ENCODE measurements at regions of chr1 and their contacts with region 1.

Region 1: GRCh38 chr1:236774926-236775325 is 20.2 kb upstream of the MTR start:
- DNase-seq: no peak
- ATAC-seq: peak; percentile 64 to 81
- H3K4me3 ChIP-seq: no peak overlapping the region
- H3K27ac ChIP-seq: no peak overlapping the region
- H3K4me1 ChIP-seq: no peaks in the 10 kb centered on the region
- H3K27me3 ChIP-seq: peaks cover 0 to 2% (median 0%) of the 10 kb centered on the region in 3 donors
- CTCF ChIP-seq: peak in 2 of 5 experiments; percentile 15 to 39
- POLR2A ChIP-seq: no peak

Region 2: GRCh38 chr1:236603991-236604904 is 170.7 kb before region 1 on chr1 and contains the start of gene HEATR1:
- in situ Hi-C with region 1: no loop called
- intact Hi-C with region 1: loop called (anchors 2 kb)
- DNase-seq: peak; percentile 92 to 93
- ATAC-seq: peak; percentile 96 to 97
- H3K4me3 ChIP-seq: peak within 1 kb of the TSS; percentile 75 to 88 (median 86)
- H3K27ac ChIP-seq: peak within 1 kb of the TSS; percentile 87 to 94 (median 89)
- H3K4me1 ChIP-seq: peaks cover 10 to 16% of the 10 kb centered on the region in 2 donors
- H3K27me3 ChIP-seq: no peaks in the 10 kb centered on the region
- CTCF ChIP-seq: peak in 1 of 5 experiments; percentile 9
- POLR2A ChIP-seq: peak; percentile 57 to 58
- total RNA-seq, gene HEATR1: 11.6 to 17.5 (median 15.8) TPM

Region 3: GRCh38 chr1:236623371-236624166 is 151.4 kb before region 1 on chr1:
- in situ Hi-C with region 1: loop called in 1 of 4 experiments (anchors 10 kb)
- intact Hi-C with region 1: no loop called
- DNase-seq: no peak
- ATAC-seq: peak in 1 of 2 donors; percentile 34
- H3K4me3 ChIP-seq: no peak overlapping the region
- H3K27ac ChIP-seq: peak overlapping the region; percentile 83 to 91 (median 86)
- H3K4me1 ChIP-seq: peaks cover 20 to 40% of the 10 kb centered on the region in 2 donors
- H3K27me3 ChIP-seq: no peaks in the 10 kb centered on the region
- CTCF ChIP-seq: no peak
- POLR2A ChIP-seq: no peak

Region 4: GRCh38 chr1:237211031-237211430 is 436.1 kb after region 1 on chr1:
- in situ Hi-C with region 1: no loop called
- intact Hi-C with region 1: no loop called
- DNase-seq: no peak
- ATAC-seq: no peak
- H3K4me3 ChIP-seq: no peak overlapping the region
- H3K27ac ChIP-seq: no peak overlapping the region
- H3K4me1 ChIP-seq: no peaks in the 10 kb centered on the region
- H3K27me3 ChIP-seq: no peaks in the 10 kb centered on the region
- CTCF ChIP-seq: no peak
- POLR2A ChIP-seq: no peak